GM12878 (cell line): ENCODE measurements at regions of chr4 and their contacts with region 1.

Region 1: GRCh38 chr4:170853422-170854021 is 763.8 kb upstream of the AADAT start:
- DNase-seq: peak; percentile 9
- ATAC-seq: peak; percentile 82
- H3K4me3 ChIP-seq: no peak overlapping the region
- H3K27ac ChIP-seq: no peak overlapping the region
- H3K4me1 ChIP-seq: no peaks in the 10 kb centered on the region
- H3K27me3 ChIP-seq: no peaks in the 10 kb centered on the region
- CTCF ChIP-seq: peak; percentile 76 to 82 (median 82)
- EP300 ChIP-seq: no peak
- POLR2A ChIP-seq: no peak
- RAD21 ChIP-seq: peak; percentile 80

Region 2: DNA sequence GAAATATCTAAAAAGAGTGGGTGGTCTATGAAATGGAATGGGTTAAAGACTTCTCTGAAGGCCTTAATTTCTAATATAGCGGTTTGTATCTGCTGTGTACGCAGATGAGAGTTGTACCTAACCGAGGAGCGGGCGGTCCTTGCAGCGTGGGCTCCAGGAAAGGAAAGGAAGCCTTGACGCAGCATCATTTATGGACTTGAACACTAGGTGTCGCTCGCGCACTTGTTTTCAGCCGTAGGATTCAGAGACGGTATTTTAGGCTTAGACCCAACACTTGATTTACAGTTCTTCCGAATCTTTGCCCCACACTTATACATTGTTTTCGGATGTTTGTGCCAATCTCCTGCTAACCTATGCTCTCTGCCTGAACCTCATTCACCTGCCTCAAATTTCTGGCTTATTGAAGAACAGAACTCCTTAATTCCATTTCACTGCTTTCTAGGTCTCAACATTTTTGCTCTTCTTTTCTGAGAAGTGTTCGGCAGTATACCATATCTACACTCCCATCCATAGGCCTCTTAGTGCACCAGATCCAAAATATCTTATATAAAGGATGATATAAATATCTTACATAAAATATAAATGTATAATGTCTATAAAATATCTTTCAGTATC is 714.8 kb before region 1 on chr4:
- CTCF ChIA-PET with region 1: interaction called, 3 read pairs
- POLR2A ChIA-PET with region 1: interaction called, 5 read pairs
- RAD21 ChIA-PET with region 1: no interaction called
- SMC1A ChIA-PET with region 1: interaction called, 4 read pairs
- in situ Hi-C with region 1: loop called (anchors 25 kb)
- intact Hi-C with region 1: loop called (anchors 5 kb)
- DNase-seq: peak; percentile 27
- ATAC-seq: peak; percentile 98
- H3K4me3 ChIP-seq: no peak overlapping the region
- H3K27ac ChIP-seq: no peak overlapping the region
- H3K4me1 ChIP-seq: no peaks in the 10 kb centered on the region
- H3K27me3 ChIP-seq: no peaks in the 10 kb centered on the region; a peak in 1 of 4 replicates
- CTCF ChIP-seq: peak; percentile 74 to 94 (median 79)
- EP300 ChIP-seq: no peak
- POLR2A ChIP-seq: no peak
- RAD21 ChIP-seq: peak; percentile 86

Region 3: DNA sequence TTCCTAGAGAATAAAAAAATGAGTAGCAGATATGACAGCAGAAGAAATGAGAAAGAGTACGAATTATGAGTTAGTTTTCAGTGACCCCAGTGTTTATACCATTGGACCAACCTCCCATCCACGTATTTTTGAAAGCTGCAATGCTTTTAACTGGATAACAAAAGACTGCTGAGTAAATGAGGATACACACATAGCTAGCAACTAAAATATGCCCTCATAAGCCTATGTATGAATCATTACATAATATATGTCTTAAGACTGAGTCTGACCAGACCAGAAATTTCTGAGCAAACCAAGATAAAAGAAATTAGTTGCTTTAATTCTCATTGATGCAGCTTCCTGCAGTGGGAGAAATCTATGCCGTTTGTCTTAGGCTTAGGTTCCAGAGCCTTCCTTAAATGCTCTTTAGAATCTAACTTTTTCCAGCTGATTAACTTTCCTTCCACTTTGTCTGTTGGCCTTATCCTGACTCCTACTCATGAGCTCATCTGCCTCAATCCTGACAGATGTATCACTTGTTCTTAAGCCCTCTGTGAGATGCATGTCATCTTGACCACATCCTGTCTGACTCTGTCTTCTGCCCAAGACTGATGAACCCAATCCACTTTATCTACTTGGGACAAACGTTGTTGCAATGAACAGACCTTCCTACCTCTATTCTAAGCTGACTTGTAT is 462.3 kb before region 1 on chr4:
- CTCF ChIA-PET with region 1: no interaction called
- POLR2A ChIA-PET with region 1: no interaction called
- RAD21 ChIA-PET with region 1: no interaction called
- SMC1A ChIA-PET with region 1: no interaction called
- in situ Hi-C with region 1: no loop called
- intact Hi-C with region 1: loop called (anchors 10 kb)
- DNase-seq: no peak
- ATAC-seq: peak; percentile 76
- H3K4me3 ChIP-seq: no peak overlapping the region
- H3K27ac ChIP-seq: no peak overlapping the region
- H3K4me1 ChIP-seq: no peaks in the 10 kb centered on the region
- H3K27me3 ChIP-seq: no peaks in the 10 kb centered on the region
- CTCF ChIP-seq: no peak
- EP300 ChIP-seq: no peak
- POLR2A ChIP-seq: no peak
- RAD21 ChIP-seq: no peak

Region 4: DNA sequence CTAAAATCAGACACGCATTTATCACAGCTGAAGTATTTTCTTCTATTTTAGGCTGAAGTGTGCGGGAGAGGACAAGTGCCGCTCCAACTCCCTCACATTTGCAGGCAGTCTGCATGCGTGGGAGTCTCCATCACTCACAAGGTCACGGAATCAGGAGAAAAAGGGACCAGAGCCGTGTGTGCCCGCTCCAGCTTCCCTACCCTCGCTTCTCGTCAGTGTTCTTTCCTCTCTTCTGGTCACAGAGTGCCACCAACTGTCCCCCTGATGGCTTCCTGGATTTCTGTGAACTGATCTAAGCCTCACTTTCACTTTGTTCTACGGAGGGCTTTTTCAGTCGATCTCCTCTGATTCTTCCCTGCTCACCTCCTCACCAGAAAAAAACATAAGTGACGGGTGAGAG is 356.4 kb before region 1 on chr4:
- CTCF ChIA-PET with region 1: no interaction called
- POLR2A ChIA-PET with region 1: no interaction called
- RAD21 ChIA-PET with region 1: no interaction called
- SMC1A ChIA-PET with region 1: interaction called, 11 read pairs
- in situ Hi-C with region 1: no loop called
- intact Hi-C with region 1: loop called (anchors 5 kb)
- DNase-seq: peak; percentile 24
- ATAC-seq: peak; percentile 94
- H3K4me3 ChIP-seq: peak overlapping the region; percentile 57
- H3K27ac ChIP-seq: no peak overlapping the region
- H3K4me1 ChIP-seq: no peaks in the 10 kb centered on the region
- H3K27me3 ChIP-seq: no peaks in the 10 kb centered on the region
- CTCF ChIP-seq: peak in 1 of 3 experiments; percentile 67; a peak in 2 of 6 replicates
- EP300 ChIP-seq: no peak
- POLR2A ChIP-seq: no peak
- RAD21 ChIP-seq: peak; percentile 28; the same call in 1 of the 2 replicates

Region 5: DNA sequence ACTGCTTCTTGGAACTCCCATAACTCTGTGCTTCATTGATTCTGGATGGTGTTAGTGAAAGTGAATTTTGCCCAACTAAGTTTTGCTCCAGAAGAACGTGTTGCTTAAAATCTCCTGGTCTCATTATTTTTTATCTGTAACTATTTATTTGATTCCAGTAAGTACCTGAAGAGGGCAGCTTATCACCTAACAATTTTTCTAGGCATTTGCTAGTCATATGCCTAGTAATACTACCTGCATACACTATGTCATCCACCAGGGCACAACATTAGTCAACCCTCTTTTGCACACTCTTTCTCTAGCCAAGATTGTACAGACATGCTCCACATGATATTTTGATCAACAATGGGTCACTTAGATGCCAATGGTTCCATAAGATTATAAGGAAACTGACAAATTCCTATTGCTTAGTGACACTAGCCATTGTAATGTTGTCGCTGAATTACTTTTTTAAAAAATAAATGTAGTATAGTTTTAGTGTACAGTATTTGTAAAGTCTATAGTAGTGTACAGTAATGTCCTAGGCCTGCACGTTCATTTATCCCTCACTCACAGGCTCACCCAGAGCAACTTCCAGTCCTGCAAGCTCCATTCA is 263.8 kb before region 1 on chr4:
- CTCF ChIA-PET with region 1: interaction called, 82 read pairs
- POLR2A ChIA-PET with region 1: no interaction called
- RAD21 ChIA-PET with region 1: interaction called, 18 read pairs
- SMC1A ChIA-PET with region 1: interaction called, 47 read pairs
- in situ Hi-C with region 1: loop called (anchors 5 kb)
- intact Hi-C with region 1: loop called (anchors 1 kb)
- DNase-seq: peak; percentile 37
- ATAC-seq: peak; percentile 100
- H3K4me3 ChIP-seq: no peak overlapping the region
- H3K27ac ChIP-seq: no peak overlapping the region
- H3K4me1 ChIP-seq: no peaks in the 10 kb centered on the region
- H3K27me3 ChIP-seq: no peaks in the 10 kb centered on the region
- CTCF ChIP-seq: peak; percentile 57 to 64 (median 63)
- EP300 ChIP-seq: no peak
- POLR2A ChIP-seq: no peak
- RAD21 ChIP-seq: peak; percentile 70

Region 6: GRCh38 chr4:170698334-170698733 is 155.2 kb before region 1 on chr4:
- CTCF ChIA-PET with region 1: no interaction called
- POLR2A ChIA-PET with region 1: no interaction called
- RAD21 ChIA-PET with region 1: no interaction called
- SMC1A ChIA-PET with region 1: no interaction called
- in situ Hi-C with region 1: no loop called
- intact Hi-C with region 1: loop called (anchors 5 kb)
- DNase-seq: peak; percentile 69
- ATAC-seq: peak; percentile 86
- H3K4me3 ChIP-seq: peak overlapping the region; percentile 44; the same call in 1 of the 2 replicates
- H3K27ac ChIP-seq: peak overlapping the region; percentile 78
- H3K4me1 ChIP-seq: peaks cover 6% of the 10 kb centered on the region
- H3K27me3 ChIP-seq: no peaks in the 10 kb centered on the region
- CTCF ChIP-seq: no peak
- EP300 ChIP-seq: peak; percentile 62 to 80; a peak in 3 of 4 replicates
- POLR2A ChIP-seq: no peak
- RAD21 ChIP-seq: no peak

Region 7: DNA sequence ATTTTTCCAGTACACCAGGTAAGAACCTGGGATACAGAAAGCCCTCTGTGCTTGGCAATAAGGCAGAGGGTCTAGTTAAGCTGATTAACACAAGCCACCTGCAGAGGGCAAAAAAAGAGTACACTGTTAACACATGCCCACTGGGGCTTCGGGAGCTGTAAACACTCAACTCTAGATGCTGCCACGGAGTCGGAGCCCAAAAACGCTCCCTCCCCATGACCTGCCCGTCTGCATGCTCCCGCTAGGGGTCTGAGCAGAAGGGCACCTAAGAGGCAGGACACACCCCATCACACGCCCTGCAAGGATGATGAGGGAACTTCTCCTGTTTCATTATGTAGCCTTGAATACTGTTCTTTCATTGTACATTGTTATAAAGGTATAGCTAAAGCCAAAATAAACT is 48.2 kb before region 1 on chr4:
- CTCF ChIA-PET with region 1: no interaction called
- POLR2A ChIA-PET with region 1: no interaction called
- RAD21 ChIA-PET with region 1: no interaction called
- SMC1A ChIA-PET with region 1: no interaction called
- in situ Hi-C with region 1: no loop called
- intact Hi-C with region 1: no loop called
- DNase-seq: no peak
- ATAC-seq: no peak
- H3K4me3 ChIP-seq: no peak overlapping the region
- H3K27ac ChIP-seq: no peak overlapping the region
- H3K4me1 ChIP-seq: no peaks in the 10 kb centered on the region
- H3K27me3 ChIP-seq: no peaks in the 10 kb centered on the region
- CTCF ChIP-seq: no peak
- EP300 ChIP-seq: no peak
- POLR2A ChIP-seq: no peak
- RAD21 ChIP-seq: no peak